ENCODE measurements at regions of chr4 and their contacts with region 1.

Region 1: DNA sequence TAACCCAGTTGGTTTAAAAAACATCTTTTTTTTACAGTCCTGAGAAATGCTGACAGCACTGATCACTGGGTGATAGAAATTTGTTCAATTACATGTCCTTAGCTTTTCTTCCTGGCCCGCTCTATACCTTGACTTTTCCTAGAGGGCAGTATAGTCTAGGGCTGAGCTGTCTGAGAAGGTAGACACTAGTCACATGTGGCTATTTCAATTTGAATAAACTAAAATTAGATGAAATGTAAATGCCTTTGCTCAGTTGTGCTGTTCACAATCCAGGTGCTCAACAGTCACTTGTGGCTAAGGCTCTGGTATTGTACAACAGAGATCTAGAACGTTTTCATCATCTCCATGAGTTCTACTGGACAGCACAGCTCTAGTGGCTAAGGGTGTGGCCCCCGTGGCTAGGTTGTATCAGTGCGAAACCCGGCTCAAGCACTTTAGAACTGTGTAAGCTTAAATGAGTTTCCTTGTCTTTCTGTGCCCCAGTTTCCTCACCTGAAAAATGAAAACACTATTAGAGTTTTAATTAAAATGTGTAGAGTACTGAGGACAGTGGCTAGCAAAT is 111.6 kb upstream of the WDR17 start:
- DNase-seq: no peak
- ATAC-seq: peak; percentile 95
- H3K4me3 ChIP-seq: no peak overlapping the region
- H3K27ac ChIP-seq: no peak overlapping the region
- H3K4me1 ChIP-seq: no peaks in the 10 kb centered on the region
- H3K27me3 ChIP-seq: peaks cover 0 to 3% of the 10 kb centered on the region in 2 experiments; a peak in 1 of 4 replicates
- CTCF ChIP-seq: peak; percentile 40 to 46 (median 44); a peak in 5 of 6 replicates
- EP300 ChIP-seq: no peak
- POLR2A ChIP-seq: no peak
- RAD21 ChIP-seq: peak; percentile 67

Region 2: DNA sequence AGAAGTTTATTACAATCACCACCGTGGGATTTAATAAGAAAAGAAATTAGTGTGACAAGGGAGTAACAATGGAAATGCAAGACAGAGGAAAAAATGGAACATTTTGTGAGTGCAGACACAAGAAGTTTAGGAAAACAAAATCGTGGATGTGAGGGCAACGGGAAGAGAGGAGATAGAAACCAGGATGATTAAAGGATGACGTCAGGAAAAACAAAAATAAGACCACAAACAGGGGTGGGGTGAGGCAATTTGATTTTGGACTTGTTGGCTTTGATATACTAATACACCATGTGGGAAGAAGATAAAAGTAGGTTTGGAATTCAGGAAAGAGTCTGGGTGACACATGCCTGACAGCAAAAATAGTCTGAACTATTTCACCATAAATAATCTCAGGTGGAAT is 103.8 kb before region 1 on chr4:
- CTCF ChIA-PET with region 1: no interaction called
- POLR2A ChIA-PET with region 1: no interaction called
- RAD21 ChIA-PET with region 1: no interaction called
- SMC1A ChIA-PET with region 1: no interaction called
- in situ Hi-C with region 1: no loop called
- intact Hi-C with region 1: no loop called
- DNase-seq: no peak
- ATAC-seq: no peak
- H3K4me3 ChIP-seq: no peak overlapping the region
- H3K27ac ChIP-seq: no peak overlapping the region
- H3K4me1 ChIP-seq: no peaks in the 10 kb centered on the region
- H3K27me3 ChIP-seq: no peaks in the 10 kb centered on the region
- CTCF ChIP-seq: no peak
- EP300 ChIP-seq: no peak
- POLR2A ChIP-seq: no peak
- RAD21 ChIP-seq: no peak

Region 3: DNA sequence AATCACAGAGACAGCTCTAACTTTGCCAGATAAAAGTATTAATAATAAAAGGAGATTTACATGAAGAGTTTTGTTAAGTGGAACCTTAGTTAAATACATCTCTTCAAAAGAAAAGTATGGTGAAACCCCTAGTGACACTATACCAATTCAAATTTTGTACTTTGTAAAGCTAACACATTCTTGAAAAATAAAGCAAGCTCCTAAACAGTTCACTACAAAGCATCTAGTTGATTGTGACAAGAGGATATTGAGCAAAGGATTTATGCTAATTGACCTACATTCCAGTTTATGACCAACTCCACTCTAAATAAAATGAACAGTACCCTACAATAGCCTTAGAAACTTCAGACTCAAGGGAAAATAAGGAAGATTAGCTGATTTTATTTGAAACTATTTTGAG is 42.2 kb after region 1 on chr4:
- CTCF ChIA-PET with region 1: interaction called, 3 read pairs
- POLR2A ChIA-PET with region 1: no interaction called
- RAD21 ChIA-PET with region 1: interaction called, 3 read pairs
- SMC1A ChIA-PET with region 1: interaction called, 5 read pairs
- in situ Hi-C with region 1: no loop called
- intact Hi-C with region 1: loop called (anchors 2 kb)
- DNase-seq: no peak
- ATAC-seq: no peak
- H3K4me3 ChIP-seq: no peak overlapping the region
- H3K27ac ChIP-seq: no peak overlapping the region
- H3K4me1 ChIP-seq: no peaks in the 10 kb centered on the region
- H3K27me3 ChIP-seq: peaks cover under 1 to 5% of the 10 kb centered on the region in 2 experiments; a peak in 2 of 4 replicates
- CTCF ChIP-seq: no peak
- EP300 ChIP-seq: no peak
- POLR2A ChIP-seq: no peak
- RAD21 ChIP-seq: no peak

Region 4: GRCh38 chr4:176054942-176055341 is 100.9 kb after region 1 on chr4:
- CTCF ChIA-PET with region 1: interaction called, 30 read pairs
- POLR2A ChIA-PET with region 1: no interaction called
- RAD21 ChIA-PET with region 1: interaction called, 8 read pairs
- SMC1A ChIA-PET with region 1: interaction called, 14 read pairs
- in situ Hi-C with region 1: no loop called
- intact Hi-C with region 1: loop called (anchors 1 kb)
- DNase-seq: no peak
- ATAC-seq: peak; percentile 51
- H3K4me3 ChIP-seq: no peak overlapping the region
- H3K27ac ChIP-seq: no peak overlapping the region
- H3K4me1 ChIP-seq: peaks cover 11% of the 10 kb centered on the region
- H3K27me3 ChIP-seq: no peaks in the 10 kb centered on the region
- CTCF ChIP-seq: peak in 2 of 3 experiments; percentile 28 to 37; a peak in 3 of 6 replicates
- EP300 ChIP-seq: no peak
- POLR2A ChIP-seq: no peak
- RAD21 ChIP-seq: peak; percentile 50